AG04450 (cell line): ENCODE measurements at regions of chr10 and their contacts with region 1.

Region 1: DNA sequence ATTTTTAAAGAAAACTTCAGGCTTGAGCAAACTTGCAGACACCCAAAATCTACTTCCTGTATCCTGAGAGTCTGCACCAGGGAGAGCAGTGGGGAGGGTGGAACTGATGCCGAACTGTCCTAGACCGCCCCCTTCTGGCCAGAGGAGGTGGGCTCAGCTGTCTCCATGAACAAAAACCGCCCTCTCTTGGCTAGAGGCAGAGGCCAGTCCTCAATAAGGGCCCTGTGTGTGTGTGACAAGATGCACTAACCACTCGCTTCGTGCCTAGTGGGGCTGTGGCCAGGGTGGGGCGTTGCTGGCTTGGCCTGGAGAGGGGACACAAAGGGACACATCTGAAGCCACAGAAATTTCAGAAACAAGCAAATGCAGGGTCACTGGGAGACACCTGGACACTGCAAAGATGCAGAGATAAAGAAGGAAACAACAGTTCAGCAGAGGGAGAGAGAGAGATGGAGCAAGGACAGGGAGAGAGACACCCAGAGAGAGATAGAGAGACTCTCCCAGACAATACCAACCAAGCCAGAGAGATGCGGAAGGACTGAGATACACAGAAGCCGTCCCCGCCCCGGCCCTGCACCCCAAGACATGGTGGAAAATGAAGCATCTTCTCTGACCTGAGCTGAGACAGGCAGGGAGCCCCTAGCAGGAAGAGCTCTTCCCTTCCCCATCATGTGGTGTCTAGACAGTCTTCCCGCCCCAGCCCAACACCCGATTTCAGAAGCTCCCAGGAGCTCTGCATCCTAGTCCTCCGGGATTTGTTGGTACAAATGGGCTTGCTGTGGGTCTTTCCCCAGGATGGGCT is 22.7 kb upstream of the FXYD4 start:
- DNase-seq: peak; percentile 37
- H3K4me3 ChIP-seq: no peak overlapping the region
- H3K27ac ChIP-seq: no peak overlapping the region
- H3K27me3 ChIP-seq: peaks cover 19% of the 10 kb centered on the region
- CTCF ChIP-seq: peak; percentile 95

Region 2: DNA sequence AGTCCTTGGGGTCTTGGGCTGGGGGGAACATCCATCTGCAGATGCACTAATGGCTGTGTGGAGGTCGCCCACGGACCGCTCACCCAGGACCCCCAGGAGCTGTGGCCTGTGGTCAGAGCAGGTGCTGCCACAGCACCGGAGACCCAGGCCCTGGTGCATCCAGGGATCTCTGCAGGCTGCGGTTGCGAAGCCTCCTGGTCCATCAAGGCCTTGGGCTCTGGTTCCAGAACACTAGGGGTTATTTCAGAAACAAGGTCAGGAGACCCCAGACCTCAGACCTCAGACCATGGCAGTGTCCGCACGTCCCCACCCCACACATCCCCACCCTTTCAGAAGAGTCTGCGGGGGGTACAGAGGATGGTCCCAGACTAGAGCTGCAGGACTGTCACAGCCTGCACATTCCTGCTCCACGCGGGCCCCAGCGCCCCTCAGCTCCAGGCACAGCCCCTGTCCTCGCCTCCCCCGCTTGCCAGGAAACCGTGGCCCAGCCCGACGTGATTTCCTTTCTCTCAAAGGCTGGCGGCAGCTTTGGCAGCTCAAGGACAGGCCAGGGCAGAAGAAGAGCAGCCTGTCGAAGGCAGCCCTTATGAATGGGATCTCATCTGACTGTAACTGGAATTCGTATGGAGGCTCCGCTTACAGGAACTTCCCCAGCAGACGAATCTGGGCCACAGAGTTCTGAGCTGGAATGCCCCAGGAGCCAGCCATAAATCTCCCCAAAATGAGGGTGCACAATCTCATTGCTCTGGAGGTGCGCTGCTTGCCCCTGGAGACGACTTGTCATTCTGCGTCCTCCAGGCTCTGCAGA is 408.0 kb before region 1 on chr10:
- CTCF ChIA-PET with region 1: no interaction called
- POLR2A ChIA-PET with region 1: no interaction called
- DNase-seq: no peak
- H3K4me3 ChIP-seq: no peak overlapping the region
- H3K27ac ChIP-seq: no peak overlapping the region
- H3K27me3 ChIP-seq: no peaks in the 10 kb centered on the region
- CTCF ChIP-seq: no peak

Region 3: DNA sequence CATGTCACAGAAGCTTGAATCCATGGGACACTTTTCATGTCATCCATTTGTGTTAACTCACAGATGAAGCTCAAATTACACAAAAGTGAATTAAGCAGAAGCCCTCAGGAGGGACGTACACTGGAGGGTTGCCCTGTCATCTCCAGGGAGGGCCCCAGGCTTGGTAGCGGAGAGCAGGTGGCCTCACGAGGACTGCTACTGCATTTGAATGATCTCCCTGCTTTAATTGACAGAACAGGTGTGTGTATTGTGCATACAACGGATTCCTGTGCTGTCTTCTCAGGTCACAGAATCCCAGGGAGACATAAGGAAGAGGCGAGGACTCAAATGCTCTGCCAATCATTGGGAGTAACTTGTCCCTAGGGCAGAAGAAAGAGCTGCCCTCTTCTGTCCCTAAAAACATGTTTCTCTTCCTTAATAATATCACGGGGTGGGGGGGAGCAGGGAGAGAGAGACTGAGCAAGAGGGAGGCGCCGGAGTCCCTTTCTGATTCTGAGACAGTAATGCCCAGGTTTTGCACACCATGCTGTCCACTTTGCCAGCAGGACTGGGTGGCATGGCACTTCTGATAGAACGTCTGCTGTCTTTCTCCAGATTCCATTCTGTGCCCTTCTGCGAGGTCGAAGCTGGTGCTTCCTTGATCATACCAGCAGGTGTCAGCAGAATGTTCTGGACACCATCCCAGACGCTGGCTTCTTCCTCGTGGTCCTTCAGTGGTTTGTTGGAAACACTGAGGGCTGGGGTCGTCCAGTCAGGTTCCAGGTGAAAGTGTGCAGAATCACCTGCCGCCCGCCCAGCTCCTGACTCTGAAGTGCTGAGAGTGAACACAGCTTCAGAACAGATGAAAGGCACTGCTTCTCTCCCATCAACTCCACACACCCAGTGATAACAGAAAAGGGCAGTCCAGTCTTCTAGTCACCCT is 55.7 kb before region 1 on chr10:
- CTCF ChIA-PET with region 1: interaction called, 14 read pairs
- POLR2A ChIA-PET with region 1: no interaction called
- DNase-seq: peak; percentile 20
- H3K4me3 ChIP-seq: no peak overlapping the region
- H3K27ac ChIP-seq: no peak overlapping the region
- H3K27me3 ChIP-seq: peaks cover 8% of the 10 kb centered on the region
- CTCF ChIP-seq: peak; percentile 72